ENCODE measurements at regions of chr14 and their contacts with region 1.

Region 1: DNA sequence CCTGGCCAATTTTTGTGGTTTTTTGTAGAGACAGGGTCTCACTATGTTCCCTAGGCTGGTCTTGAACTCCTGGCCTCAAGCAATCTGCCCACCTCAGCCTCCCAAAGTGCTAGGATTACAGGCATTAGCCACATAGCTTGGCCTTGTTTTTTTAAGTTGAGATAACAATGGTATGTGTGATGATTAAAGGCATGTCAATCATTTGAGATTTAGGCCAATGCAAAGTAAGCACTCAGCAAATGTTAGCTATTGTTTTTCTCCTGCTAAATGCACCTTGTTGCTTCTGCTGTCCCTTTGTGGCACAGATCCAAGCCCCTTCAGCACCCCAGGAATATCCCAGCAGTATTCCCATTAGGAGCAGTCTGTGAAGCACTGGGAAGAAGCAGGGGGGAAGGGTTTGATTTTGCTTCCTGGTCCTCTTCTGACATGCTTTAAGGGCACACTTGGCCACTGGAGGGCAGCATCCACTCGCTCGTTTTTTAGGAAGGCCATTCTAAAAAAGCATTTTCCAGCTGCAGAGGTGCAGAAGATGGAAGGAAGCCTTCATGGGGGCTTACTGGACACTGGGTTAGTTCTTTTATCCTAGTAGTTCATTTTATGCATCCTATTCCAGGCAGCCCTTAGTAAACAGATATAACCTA is 70.2 kb upstream of the ZFP36L1 start:
- DNase-seq: peak; percentile 87
- ATAC-seq: peak; percentile 49
- H3K4me3 Mint-ChIP-seq: no peak overlapping the region
- H3K27ac Mint-ChIP-seq: no peak overlapping the region
- H3K4me1 Mint-ChIP-seq: no peaks in the 10 kb centered on the region
- H3K27me3 Mint-ChIP-seq: no peaks in the 10 kb centered on the region

Region 2: DNA sequence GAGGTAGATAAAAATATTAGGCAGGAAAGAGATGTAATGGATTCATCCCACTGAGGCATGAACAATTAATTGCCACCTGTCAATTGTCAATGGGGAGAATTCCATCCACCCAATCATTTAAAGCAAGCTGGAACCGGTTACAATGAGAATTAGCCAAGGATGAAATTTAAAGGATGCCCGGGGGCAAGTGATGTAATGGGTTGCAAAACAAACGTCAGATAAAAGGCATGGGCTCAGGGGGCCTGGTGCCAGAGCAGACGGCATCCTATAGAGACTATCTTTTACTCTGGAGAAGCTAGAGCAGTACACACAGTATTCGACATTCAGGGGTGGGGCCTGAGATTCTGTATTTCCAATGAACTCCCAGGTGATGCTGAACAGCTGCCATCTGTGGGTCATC is 10.3 kb after region 1 on chr14:
- CTCF ChIA-PET with region 1: interaction called, 14 read pairs
- POLR2A ChIA-PET with region 1: no interaction called
- intact Hi-C with region 1: no loop called
- DNase-seq: no peak
- ATAC-seq: no peak
- H3K4me3 Mint-ChIP-seq: no peak overlapping the region
- H3K27ac Mint-ChIP-seq: no peak overlapping the region
- H3K4me1 Mint-ChIP-seq: no peaks in the 10 kb centered on the region
- H3K27me3 Mint-ChIP-seq: no peaks in the 10 kb centered on the region

Region 3: GRCh38 chr14:68951042-68951914 is 88.2 kb after region 1 on chr14:
- CTCF ChIA-PET with region 1: no interaction called
- POLR2A ChIA-PET with region 1: no interaction called
- intact Hi-C with region 1: no loop called
- DNase-seq: no peak
- ATAC-seq: no peak
- H3K4me3 Mint-ChIP-seq: no peak overlapping the region
- H3K27ac Mint-ChIP-seq: peak overlapping the region; percentile 47
- H3K4me1 Mint-ChIP-seq: peaks cover 86% of the 10 kb centered on the region
- H3K27me3 Mint-ChIP-seq: no peaks in the 10 kb centered on the region

Region 4: DNA sequence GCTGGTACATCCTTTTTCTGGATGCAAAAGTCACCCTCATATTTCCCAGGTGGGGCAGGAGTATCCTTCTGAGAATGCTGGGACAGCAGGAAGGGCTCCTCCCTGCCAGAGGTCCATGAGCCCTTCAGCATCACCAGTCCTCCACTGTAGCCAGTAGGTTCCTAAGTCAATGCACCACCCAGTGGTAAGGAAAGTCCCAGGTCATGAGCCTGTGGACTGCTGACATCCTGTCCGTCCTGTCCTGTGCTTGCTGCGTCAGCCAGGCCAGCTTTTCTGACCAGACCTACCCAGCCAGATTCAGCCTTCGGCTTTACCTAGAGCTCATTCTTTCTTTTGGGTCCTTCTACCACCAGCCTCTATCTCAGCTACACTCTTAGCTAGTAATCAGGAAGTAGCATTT is 139.0 kb after region 1 on chr14:
- CTCF ChIA-PET with region 1: interaction called, 4 read pairs
- POLR2A ChIA-PET with region 1: no interaction called
- intact Hi-C with region 1: loop called in 1 of 2 experiments (anchors 5 kb)
- DNase-seq: no peak
- ATAC-seq: no peak
- H3K4me3 Mint-ChIP-seq: no peak overlapping the region
- H3K27ac Mint-ChIP-seq: no peak overlapping the region
- H3K4me1 Mint-ChIP-seq: no peaks in the 10 kb centered on the region
- H3K27me3 Mint-ChIP-seq: no peaks in the 10 kb centered on the region

Region 5: GRCh38 chr14:69107407-69108003 is 244.4 kb after region 1 on chr14:
- CTCF ChIA-PET with region 1: interaction called, 25 read pairs
- POLR2A ChIA-PET with region 1: no interaction called
- intact Hi-C with region 1: loop called (anchors 1 to 5 kb)
- DNase-seq: peak; percentile 34
- ATAC-seq: peak; percentile 78
- H3K4me3 Mint-ChIP-seq: no peak overlapping the region
- H3K27ac Mint-ChIP-seq: no peak overlapping the region
- H3K4me1 Mint-ChIP-seq: peaks cover 3% of the 10 kb centered on the region
- H3K27me3 Mint-ChIP-seq: no peaks in the 10 kb centered on the region

Region 6: GRCh38 chr14:69460093-69460701 is 597.1 kb after region 1 on chr14:
- CTCF ChIA-PET with region 1: no interaction called
- POLR2A ChIA-PET with region 1: no interaction called
- intact Hi-C with region 1: loop called in 1 of 2 experiments (anchors 10 kb)
- DNase-seq: peak; percentile 79
- ATAC-seq: peak; percentile 93
- H3K4me3 Mint-ChIP-seq: no peak overlapping the region
- H3K27ac Mint-ChIP-seq: no peak overlapping the region
- H3K4me1 Mint-ChIP-seq: no peaks in the 10 kb centered on the region
- H3K27me3 Mint-ChIP-seq: no peaks in the 10 kb centered on the region